Posterior cingulate gyrus (tissue), 11 donors: ENCODE measurements at regions of chr14 and their contacts with region 1.

Region 1: GRCh38 chr14:75132382-75133086 is 5.7 kb upstream of the NEK9 start:
- DNase-seq: peak in 2 of 10 donors; percentile 32 to 38

Region 2: DNA sequence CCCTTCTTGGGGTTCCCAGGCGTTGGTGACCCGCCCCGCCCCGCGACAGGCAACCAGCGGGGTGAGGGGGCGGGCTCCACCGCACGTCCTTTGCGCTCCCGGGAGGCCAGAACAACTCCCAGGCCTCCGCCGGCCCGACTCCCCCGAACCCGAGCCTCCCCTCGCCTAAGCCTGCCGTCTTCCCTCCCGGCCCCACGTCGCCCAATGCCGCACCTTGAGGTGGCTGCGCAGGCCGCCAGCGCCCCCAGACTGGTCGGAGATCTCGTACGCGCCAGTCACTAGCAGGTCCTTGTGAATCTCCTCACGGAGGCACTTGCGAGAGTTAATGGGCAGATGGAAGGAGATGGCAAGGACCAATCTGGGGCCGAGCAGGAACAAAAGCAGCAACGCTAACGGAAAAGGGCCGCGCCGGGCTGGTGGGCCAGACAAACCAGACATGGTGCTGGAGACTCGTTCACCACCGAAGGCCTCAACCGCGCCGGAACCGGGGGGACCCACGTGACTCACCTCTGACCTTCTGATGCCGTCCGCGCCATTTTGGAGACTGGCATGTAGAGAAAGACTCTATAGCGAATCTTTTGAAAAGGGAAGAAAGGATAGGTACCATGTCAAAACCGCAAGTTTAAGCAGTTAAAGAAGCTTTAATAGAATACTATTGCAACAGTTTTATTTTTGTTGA is 43.7 kb after region 1 on chr14 and contains the start of gene TMED10:
- intact Hi-C with region 1: loop called (anchors 2 kb)
- DNase-seq: peak; percentile 85 to 98 (median 90)